ENCODE measurements at regions of chr7 and their contacts with region 1.

Region 1: DNA sequence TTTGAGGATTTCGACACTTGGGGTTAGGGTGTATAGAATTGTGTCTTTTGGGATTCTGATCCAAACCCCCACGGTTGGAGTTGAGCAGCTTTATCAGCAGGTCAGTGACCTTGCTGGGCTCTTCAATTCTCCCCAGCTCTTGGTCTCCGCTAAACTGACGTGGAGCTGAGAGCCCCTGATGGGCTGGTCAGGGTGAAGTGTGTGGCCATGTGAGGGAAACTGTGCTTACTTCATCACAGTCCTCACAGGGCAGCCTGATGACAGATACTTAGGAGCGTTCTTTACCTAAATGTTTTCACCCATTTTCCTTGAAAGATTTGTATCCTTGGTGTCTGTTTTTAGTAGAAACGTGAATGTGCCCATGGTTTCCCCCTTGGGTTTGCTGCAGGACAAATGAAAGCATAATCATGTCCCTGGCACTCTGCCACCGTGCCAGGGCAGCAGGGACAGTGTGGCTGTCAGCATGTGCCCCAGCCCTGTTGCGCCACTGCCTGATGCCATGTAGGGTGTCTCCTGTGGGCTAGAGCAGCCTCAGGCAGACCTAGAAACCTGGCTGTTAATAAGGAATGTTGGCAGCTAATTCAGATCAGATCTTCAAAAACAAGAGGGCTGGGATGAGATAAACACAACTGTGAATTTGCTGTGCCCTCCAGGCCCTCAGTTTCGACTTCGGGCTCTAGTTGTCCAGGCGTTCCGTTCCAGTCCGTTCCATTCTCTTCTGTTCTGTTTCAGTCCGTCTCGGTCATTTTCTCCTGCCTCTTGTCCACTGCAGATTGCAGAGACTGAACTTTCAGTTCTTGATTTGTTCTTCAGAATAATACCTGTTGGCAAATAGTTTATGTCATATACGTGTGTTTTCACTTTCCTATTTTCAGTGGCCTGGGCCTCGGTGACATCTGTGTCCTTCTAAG is 96.8 kb downstream of the TRRAP start:
- DNase-seq: no peak
- ATAC-seq: no peak
- H3K4me3 ChIP-seq: no peak overlapping the region
- H3K27ac ChIP-seq: no peak overlapping the region
- H3K4me1 ChIP-seq: no peaks in the 10 kb centered on the region
- H3K27me3 ChIP-seq: no peaks in the 10 kb centered on the region
- CTCF ChIP-seq: no peak

Region 2: GRCh38 chr7:98907570-98907969 is 67.6 kb before region 1 on chr7:
- intact Hi-C with region 1: loop called (anchors 10 kb)
- DNase-seq: no peak
- ATAC-seq: no peak
- H3K4me3 ChIP-seq: no peak overlapping the region
- H3K27ac ChIP-seq: no peak overlapping the region
- H3K4me1 ChIP-seq: no peaks in the 10 kb centered on the region
- H3K27me3 ChIP-seq: no peaks in the 10 kb centered on the region
- CTCF ChIP-seq: no peak

Region 3: GRCh38 chr7:99244939-99245338 is 269.8 kb after region 1 on chr7:
- intact Hi-C with region 1: no loop called
- DNase-seq: no peak
- ATAC-seq: no peak
- H3K4me3 ChIP-seq: no peak overlapping the region
- H3K27ac ChIP-seq: no peak overlapping the region
- H3K4me1 ChIP-seq: no peaks in the 10 kb centered on the region
- H3K27me3 ChIP-seq: no peaks in the 10 kb centered on the region
- CTCF ChIP-seq: no peak

Measured in upper lobe of right lung (tissue), 1 donor.